ENCODE measurements at regions of chr2 and their contacts with region 1.

Region 1: DNA sequence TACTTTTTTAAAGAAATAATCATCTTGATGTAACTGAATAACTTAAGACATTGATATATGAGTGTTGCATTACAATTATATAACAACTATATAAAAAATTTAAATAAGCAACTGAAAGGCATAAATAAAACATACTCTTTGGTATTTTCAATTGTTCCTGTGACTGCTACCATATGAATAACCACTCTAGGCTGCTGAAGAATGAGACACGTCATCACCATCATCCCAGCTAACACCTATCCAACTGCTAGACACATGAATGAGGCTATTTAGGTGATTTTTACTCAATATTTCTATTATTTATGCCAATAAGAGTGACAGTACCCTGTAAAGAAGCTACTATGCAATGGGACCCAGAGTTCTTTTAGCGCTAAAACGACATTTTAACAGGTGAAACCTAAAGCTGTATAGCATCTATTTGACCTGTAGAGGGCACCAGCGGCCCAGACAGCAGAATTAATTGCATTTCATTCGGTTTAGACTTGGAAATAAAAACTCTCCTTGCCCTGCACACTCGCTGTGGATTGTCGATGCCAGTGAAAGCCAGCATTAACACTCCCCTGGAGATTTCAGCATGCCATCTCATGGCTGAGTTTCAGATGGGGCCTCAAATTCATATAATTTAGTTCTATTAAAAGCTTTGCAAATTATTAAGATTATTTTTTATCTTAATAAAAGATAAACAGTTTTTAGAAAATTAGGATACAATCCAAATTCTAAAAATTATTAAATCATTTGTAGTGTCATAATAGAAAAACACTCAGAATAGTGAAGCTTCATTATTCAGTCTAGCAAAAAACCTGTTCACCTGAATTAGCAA is 89.4 kb upstream of the MAP2 start:
- DNase-seq: no peak
- ATAC-seq: peak; percentile 56
- H3K4me3 Mint-ChIP-seq: no peak overlapping the region
- H3K27ac Mint-ChIP-seq: no peak overlapping the region
- H3K4me1 Mint-ChIP-seq: no peaks in the 10 kb centered on the region
- H3K27me3 Mint-ChIP-seq: peaks cover 4% of the 10 kb centered on the region
- CTCF ChIP-seq: peak; percentile 97

Region 2: GRCh38 chr2:209179647-209180046 is 154.8 kb before region 1 on chr2:
- CTCF ChIA-PET with region 1: no interaction called
- POLR2A ChIA-PET with region 1: no interaction called
- intact Hi-C with region 1: no loop called
- DNase-seq: no peak
- ATAC-seq: no peak
- H3K4me3 Mint-ChIP-seq: no peak overlapping the region
- H3K27ac Mint-ChIP-seq: no peak overlapping the region
- H3K4me1 Mint-ChIP-seq: no peaks in the 10 kb centered on the region
- H3K27me3 Mint-ChIP-seq: no peaks in the 10 kb centered on the region
- CTCF ChIP-seq: no peak

Region 3: GRCh38 chr2:209323712-209324111 is 10.7 kb before region 1 on chr2:
- CTCF ChIA-PET with region 1: interaction called, 15 read pairs
- POLR2A ChIA-PET with region 1: no interaction called
- intact Hi-C with region 1: no loop called
- DNase-seq: no peak
- ATAC-seq: no peak
- H3K4me3 Mint-ChIP-seq: no peak overlapping the region
- H3K27ac Mint-ChIP-seq: no peak overlapping the region
- H3K4me1 Mint-ChIP-seq: no peaks in the 10 kb centered on the region
- H3K27me3 Mint-ChIP-seq: peaks cover 5% of the 10 kb centered on the region
- CTCF ChIP-seq: no peak

Region 4: DNA sequence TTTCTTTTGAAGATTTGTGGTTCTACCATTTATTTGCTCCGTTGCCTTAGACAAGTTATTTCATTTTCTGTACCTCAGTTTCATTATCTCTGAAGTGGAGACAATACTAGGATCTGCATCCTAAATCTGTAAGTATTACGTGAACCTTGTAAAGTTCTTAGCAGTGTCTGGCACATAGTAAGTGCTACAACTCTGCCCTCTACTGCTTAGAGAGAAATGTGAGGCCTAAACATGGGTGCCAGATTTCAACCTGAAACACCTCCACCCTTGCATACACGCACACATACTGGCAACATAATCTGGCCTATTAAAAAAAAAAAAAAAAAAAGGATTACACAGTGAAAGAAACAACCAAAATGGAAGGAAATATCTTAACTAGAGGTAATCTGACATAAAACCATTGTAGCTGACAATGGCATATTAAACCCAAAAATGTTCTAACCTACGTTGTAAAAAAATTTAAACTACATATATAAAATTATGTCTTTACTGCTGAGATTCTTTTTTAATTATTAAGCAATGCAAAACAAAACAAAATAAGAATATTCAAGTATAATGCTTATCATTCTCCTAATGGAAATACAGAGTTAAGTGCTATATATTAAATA is 222.1 kb after region 1 on chr2:
- CTCF ChIA-PET with region 1: interaction called, 53 read pairs
- POLR2A ChIA-PET with region 1: no interaction called
- intact Hi-C with region 1: loop called (anchors 1 kb)
- DNase-seq: no peak
- ATAC-seq: peak; percentile 61
- H3K4me3 Mint-ChIP-seq: no peak overlapping the region
- H3K27ac Mint-ChIP-seq: no peak overlapping the region
- H3K4me1 Mint-ChIP-seq: no peaks in the 10 kb centered on the region
- H3K27me3 Mint-ChIP-seq: no peaks in the 10 kb centered on the region
- CTCF ChIP-seq: no peak

Region 5: DNA sequence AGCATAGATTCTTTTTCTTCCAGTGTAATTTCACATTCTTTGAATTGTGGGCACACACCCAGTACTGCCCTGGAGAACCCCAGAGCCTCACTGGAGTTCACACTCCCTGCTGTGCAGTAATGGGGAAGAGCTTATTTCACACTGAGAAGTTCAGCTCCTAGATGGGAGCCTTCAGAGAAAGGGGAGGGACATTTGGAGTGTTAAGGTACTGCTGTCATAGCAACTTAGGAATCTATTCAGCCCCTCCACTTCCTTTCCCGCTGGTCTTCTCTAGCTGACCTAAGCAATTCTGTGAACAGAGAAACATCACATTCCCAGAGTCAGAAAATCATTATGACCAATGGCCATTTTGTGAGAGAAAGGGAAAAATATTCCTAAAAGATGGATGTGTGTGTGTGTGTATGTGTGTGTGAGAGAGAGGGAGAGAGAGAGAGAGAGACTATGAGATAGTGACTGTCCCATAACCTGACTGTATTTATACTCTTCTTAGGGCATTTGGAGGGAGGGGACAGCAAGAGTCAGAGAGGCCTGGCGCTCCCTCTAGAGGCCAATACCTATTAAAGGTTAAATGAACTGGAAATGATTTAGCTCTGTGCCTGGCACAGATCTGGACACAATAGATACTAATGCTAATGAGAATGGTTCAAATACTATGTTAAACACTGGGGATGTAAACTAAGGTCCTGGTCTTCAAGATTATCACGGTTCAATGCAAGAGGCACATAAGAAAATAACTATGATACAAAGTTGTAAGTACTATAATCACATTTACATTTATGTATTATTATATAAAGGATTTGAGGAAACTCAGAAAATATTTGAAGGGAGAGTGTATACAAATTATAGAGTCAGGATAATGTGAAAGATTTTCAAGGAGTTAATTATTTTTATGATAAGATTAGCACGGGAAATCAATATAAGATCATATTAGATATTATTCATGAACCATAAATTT is 626.5 kb after region 1 on chr2:
- CTCF ChIA-PET with region 1: interaction called, 30 read pairs
- POLR2A ChIA-PET with region 1: no interaction called
- intact Hi-C with region 1: loop called (anchors 1 kb)
- DNase-seq: no peak
- ATAC-seq: peak; percentile 47
- H3K4me3 Mint-ChIP-seq: no peak overlapping the region
- H3K27ac Mint-ChIP-seq: no peak overlapping the region
- H3K4me1 Mint-ChIP-seq: no peaks in the 10 kb centered on the region
- H3K27me3 Mint-ChIP-seq: peaks cover 8% of the 10 kb centered on the region
- CTCF ChIP-seq: peak; percentile 31